ENCODE measurements at regions of chr1 and their contacts with region 1.

Region 1: DNA sequence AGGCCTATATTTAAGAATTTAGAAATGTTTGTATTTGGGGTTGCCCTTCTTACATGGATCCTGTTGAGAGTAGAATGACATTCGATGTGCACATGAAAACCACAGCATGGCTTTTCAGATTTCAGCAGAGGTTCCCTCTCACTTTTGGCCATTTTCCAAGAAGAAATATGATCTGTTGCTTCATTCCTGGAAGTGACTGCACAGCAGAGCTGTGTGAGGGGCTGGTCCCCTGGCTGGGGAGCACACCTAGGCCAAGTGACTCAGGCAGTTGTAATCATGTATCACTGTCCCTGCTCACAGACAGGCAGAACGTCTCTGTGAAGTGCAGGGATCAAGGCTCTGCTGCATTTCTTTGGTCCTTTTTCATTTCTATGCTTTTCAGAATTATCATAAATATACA is 32.3 kb downstream of the AGT start:
- DNase-seq: peak; percentile 69 to 84
- H3K4me3 ChIP-seq: no peak overlapping the region
- H3K27ac ChIP-seq: no peak overlapping the region
- H3K4me1 ChIP-seq: peaks cover 42% of the 10 kb centered on the region
- H3K27me3 ChIP-seq: no peaks in the 10 kb centered on the region
- CTCF ChIP-seq: no peak

Region 2: GRCh38 chr1:230772457-230773395 is 91.1 kb after region 1 on chr1:
- CTCF ChIA-PET with region 1: no interaction called
- POLR2A ChIA-PET with region 1: no interaction called
- intact Hi-C with region 1: loop called (anchors 5 kb)
- DNase-seq: peak; percentile 24 to 52
- H3K4me3 ChIP-seq: no peak overlapping the region
- H3K27ac ChIP-seq: no peak overlapping the region
- H3K4me1 ChIP-seq: peaks cover 11% of the 10 kb centered on the region; the same call in 1 of the 2 replicates
- H3K27me3 ChIP-seq: peaks cover 30% of the 10 kb centered on the region
- CTCF ChIP-seq: peak; percentile 61

Region 3: DNA sequence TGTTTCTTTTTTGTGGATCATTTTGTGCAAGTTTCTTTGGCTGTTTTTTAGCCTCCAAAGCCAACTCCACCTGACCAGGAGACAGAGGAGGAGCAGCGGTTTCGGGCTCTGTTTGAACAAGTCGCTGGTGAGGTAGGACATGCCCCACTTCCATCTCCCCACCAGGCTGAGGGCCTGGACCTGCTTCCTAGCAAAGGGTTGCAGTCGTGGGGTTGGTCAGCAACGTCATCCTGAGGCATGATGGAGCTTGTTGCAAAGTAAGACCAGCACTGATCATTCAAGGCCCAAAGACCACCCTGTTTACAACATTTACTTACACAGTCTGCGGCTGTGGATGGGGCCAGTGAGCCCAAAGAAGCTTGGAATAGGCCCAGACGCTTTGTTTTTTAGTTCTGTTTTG is 105.9 kb after region 1 on chr1:
- CTCF ChIA-PET with region 1: no interaction called
- POLR2A ChIA-PET with region 1: no interaction called
- intact Hi-C with region 1: no loop called
- DNase-seq: no peak
- H3K4me3 ChIP-seq: no peak overlapping the region
- H3K27ac ChIP-seq: no peak overlapping the region
- H3K4me1 ChIP-seq: no peaks in the 10 kb centered on the region
- H3K27me3 ChIP-seq: peaks cover 16% of the 10 kb centered on the region
- CTCF ChIP-seq: no peak

Region 4: GRCh38 chr1:230978491-230979388 is 297.1 kb after region 1 on chr1 and contains the starts of genes ARV1 and TTC13:
- CTCF ChIA-PET with region 1: no interaction called
- POLR2A ChIA-PET with region 1: no interaction called
- intact Hi-C with region 1: loop called (anchors 2 kb)
- DNase-seq: peak; percentile 97 to 98
- H3K4me3 ChIP-seq: peak within 1 kb of the TSS; percentile 86
- H3K27ac ChIP-seq: no peak within 1 kb of the TSS
- H3K4me1 ChIP-seq: peaks cover 19% of the 10 kb centered on the region
- H3K27me3 ChIP-seq: no peaks in the 10 kb centered on the region
- CTCF ChIP-seq: peak; percentile 50; the same call in 1 of the 2 replicates
- total RNA-seq, gene ARV1: 8.0 and 12.0 TPM in 2 replicates
- total RNA-seq, gene TTC13: 7.5 and 10.7 TPM in 2 replicates

Measured in PC-9 (cell line).